ENCODE measurements at regions of chrX and their contacts with region 1.

Region 1: GRCh38 chrX:132984058-132984650 is 25.7 kb upstream of the HS6ST2 start:
- DNase-seq: no peak
- ATAC-seq: no peak
- H3K4me3 ChIP-seq: no peak overlapping the region
- H3K27ac ChIP-seq: no peak overlapping the region
- H3K4me1 ChIP-seq: no peaks in the 10 kb centered on the region
- H3K27me3 ChIP-seq: peaks cover 0 to 17% (median 0%) of the 10 kb centered on the region in 3 donors
- CTCF ChIP-seq: no peak

Region 2: GRCh38 chrX:133171962-133172708 is 188.0 kb after region 1 on chrX:
- intact Hi-C with region 1: loop called in 1 of 2 experiments (anchors 5 kb)
- DNase-seq: no peak
- ATAC-seq: no peak
- H3K4me3 ChIP-seq: no peak overlapping the region
- H3K27ac ChIP-seq: no peak overlapping the region
- H3K4me1 ChIP-seq: no peaks in the 10 kb centered on the region
- H3K27me3 ChIP-seq: no peaks in the 10 kb centered on the region
- CTCF ChIP-seq: peak; percentile 43

Measured in psoas muscle (tissue), 8 donors.